ENCODE measurements at regions of chr21 and their contacts with region 1.

Region 1: GRCh38 chr21:25441835-25442234 is 165.4 kb downstream of the MRPL39 start:
- DNase-seq: no peak
- ATAC-seq: no peak
- H3K4me3 ChIP-seq: no peak overlapping the region
- H3K27ac ChIP-seq: no peak overlapping the region
- H3K4me1 ChIP-seq: no peaks in the 10 kb centered on the region
- H3K27me3 ChIP-seq: no peaks in the 10 kb centered on the region
- CTCF ChIP-seq: no peak
- EP300 ChIP-seq: no peak
- POLR2A ChIP-seq: no peak
- RAD21 ChIP-seq: no peak

Region 2: GRCh38 chr21:25360593-25360992 is 81.2 kb before region 1 on chr21:
- CTCF ChIA-PET with region 1: no interaction called
- POLR2A ChIA-PET with region 1: no interaction called
- RAD21 ChIA-PET with region 1: no interaction called
- SMC1A ChIA-PET with region 1: no interaction called
- in situ Hi-C with region 1: no loop called
- intact Hi-C with region 1: no loop called
- DNase-seq: no peak
- ATAC-seq: peak; percentile 71
- H3K4me3 ChIP-seq: no peak overlapping the region
- H3K27ac ChIP-seq: no peak overlapping the region
- H3K4me1 ChIP-seq: no peaks in the 10 kb centered on the region
- H3K27me3 ChIP-seq: no peaks in the 10 kb centered on the region
- CTCF ChIP-seq: peak in 1 of 3 experiments; percentile 35; a peak in 1 of 6 replicates
- EP300 ChIP-seq: no peak
- POLR2A ChIP-seq: no peak
- RAD21 ChIP-seq: no peak

Region 3: DNA sequence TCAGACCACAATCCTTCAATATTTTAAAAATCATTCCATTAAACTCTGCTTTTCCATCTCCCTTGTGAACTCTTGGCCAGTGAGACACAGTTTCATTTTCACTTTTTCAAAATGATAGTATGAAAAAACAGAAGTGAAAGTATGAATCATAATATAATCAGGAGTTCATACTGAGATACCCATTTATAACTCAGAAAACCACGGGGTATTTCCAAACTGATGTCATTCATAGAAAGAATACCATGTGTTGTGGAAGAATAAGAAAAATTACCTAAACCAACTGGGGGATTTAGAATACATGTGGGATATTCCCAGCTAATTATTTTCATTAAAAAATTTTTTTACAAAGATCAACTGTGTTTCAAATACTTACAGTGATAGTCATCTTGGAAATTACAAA is 15.6 kb after region 1 on chr21:
- CTCF ChIA-PET with region 1: interaction called, 4 read pairs
- POLR2A ChIA-PET with region 1: interaction called, 3 read pairs
- RAD21 ChIA-PET with region 1: no interaction called
- SMC1A ChIA-PET with region 1: interaction called, 17 read pairs
- in situ Hi-C with region 1: no loop called
- intact Hi-C with region 1: no loop called
- DNase-seq: peak; percentile 83
- ATAC-seq: peak; percentile 60
- H3K4me3 ChIP-seq: no peak overlapping the region
- H3K27ac ChIP-seq: peak overlapping the region; percentile 98
- H3K4me1 ChIP-seq: peaks cover 52% of the 10 kb centered on the region
- H3K27me3 ChIP-seq: no peaks in the 10 kb centered on the region
- CTCF ChIP-seq: no peak
- EP300 ChIP-seq: peak; percentile 100
- POLR2A ChIP-seq: no peak
- RAD21 ChIP-seq: peak; percentile 25; the same call in 1 of the 2 replicates

Measured in GM12878 (cell line).